ENCODE measurements at regions of chr1 and their contacts with region 1.

Region 1: DNA sequence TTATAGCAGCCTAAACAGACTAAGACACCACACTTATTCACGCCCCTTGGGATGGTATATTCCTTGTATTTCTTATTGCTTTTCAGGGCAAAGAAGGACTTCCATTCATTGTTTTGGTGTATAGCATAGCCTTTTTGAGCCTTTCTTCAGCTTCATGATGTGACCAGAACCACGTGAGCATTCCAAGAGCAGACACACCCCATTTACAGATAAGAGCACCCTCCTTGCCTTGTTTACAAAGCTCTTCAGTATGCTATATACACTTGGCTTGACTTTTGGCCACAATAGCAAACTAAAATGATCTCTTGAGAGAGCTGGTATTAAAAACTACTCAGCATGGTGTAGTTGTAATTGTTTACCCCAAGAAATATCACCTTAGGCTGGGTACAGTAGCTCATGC is 78.7 kb downstream of the PIK3R3 start:
- DNase-seq: no peak
- H3K4me3 ChIP-seq: no peak overlapping the region
- H3K27me3 ChIP-seq: no peaks in the 10 kb centered on the region
- CTCF ChIP-seq: no peak

Region 2: GRCh38 chr1:46021046-46021996 is 32.4 kb before region 1 on chr1:
- CTCF ChIA-PET with region 1: no interaction called
- POLR2A ChIA-PET with region 1: interaction called, 27 read pairs
- DNase-seq: no peak
- H3K4me3 ChIP-seq: no peak overlapping the region
- H3K27me3 ChIP-seq: no peaks in the 10 kb centered on the region
- CTCF ChIP-seq: no peak